ENCODE measurements at regions of chr7 and their contacts with region 1.

Region 1: GRCh38 chr7:135957627-135958026 is 19.5 kb downstream of the MTPN start:
- DNase-seq: no peak
- H3K4me3 ChIP-seq: no peak overlapping the region
- H3K27ac ChIP-seq: no peak overlapping the region
- H3K4me1 ChIP-seq: no peaks in the 10 kb centered on the region
- H3K27me3 ChIP-seq: no peaks in the 10 kb centered on the region
- CTCF ChIP-seq: no peak

Region 2: GRCh38 chr7:135251496-135252391 is 705.9 kb before region 1 on chr7:
- CTCF ChIA-PET with region 1: no interaction called
- dilution Hi-C with region 1: no loop called
- in situ Hi-C with region 1: no loop called
- intact Hi-C with region 1: no loop called
- DNase-seq: no peak
- H3K4me3 ChIP-seq: no peak overlapping the region
- H3K27ac ChIP-seq: no peak overlapping the region
- H3K4me1 ChIP-seq: peaks cover 16% of the 10 kb centered on the region
- H3K27me3 ChIP-seq: no peaks in the 10 kb centered on the region
- CTCF ChIP-seq: no peak

Region 3: DNA sequence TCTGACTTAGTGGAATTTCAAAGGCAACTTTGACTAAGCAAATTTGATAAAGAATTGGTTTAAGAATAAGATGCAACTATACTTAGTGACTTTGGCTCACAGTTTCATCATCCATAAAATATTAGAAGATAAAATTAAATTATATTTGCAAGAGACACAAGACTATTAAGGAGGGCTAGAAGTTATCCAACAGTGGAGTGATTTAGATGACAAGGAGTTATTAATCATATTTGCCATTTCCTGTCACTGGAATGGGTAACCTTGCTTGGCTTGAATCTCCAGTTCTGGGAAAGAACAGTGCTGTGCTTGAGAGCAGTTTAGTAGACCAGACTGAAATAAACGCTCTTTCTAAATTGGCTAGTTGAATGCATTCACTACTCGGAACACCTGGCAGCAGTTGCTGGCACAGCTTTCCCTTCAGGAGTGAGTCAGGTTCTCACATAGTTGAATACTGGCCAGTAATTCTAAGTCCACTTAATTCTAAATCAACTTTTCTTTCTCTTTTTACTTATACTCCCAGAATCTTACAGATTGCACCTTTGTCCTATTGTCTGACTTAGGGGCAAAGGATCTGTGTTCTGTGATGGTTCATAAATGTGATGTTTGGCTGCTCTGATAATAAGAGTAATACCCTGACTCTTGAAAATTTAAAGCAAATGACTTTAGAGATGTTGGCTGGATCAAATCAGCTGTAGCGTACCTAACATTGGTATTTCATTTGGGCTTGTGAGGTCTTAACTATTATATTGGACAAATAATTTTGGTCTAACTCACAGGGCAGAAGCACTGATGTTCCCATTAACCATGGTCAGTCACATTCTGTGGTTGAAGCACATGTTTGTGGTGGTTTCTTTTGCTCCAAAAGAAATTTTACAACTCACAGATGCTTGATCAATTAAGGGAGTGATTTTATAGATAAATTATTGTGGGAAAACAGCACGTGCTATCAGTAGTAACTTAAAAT is 278.7 kb before region 1 on chr7:
- CTCF ChIA-PET with region 1: no interaction called
- dilution Hi-C with region 1: no loop called
- in situ Hi-C with region 1: no loop called
- intact Hi-C with region 1: no loop called
- DNase-seq: peak; percentile 82
- H3K4me3 ChIP-seq: peak overlapping the region in 1 of 3 experiments; percentile 14
- H3K27ac ChIP-seq: peak overlapping the region; percentile 73
- H3K4me1 ChIP-seq: peaks cover 40% of the 10 kb centered on the region
- H3K27me3 ChIP-seq: no peaks in the 10 kb centered on the region
- CTCF ChIP-seq: no peak

Region 4: GRCh38 chr7:135970682-135971365 is 13.2 kb after region 1 on chr7:
- CTCF ChIA-PET with region 1: no interaction called
- dilution Hi-C with region 1: no loop called
- in situ Hi-C with region 1: no loop called
- intact Hi-C with region 1: loop called (anchors 2 kb)
- DNase-seq: no peak
- H3K4me3 ChIP-seq: no peak overlapping the region
- H3K27ac ChIP-seq: no peak overlapping the region
- H3K4me1 ChIP-seq: peaks cover 8% of the 10 kb centered on the region
- H3K27me3 ChIP-seq: no peaks in the 10 kb centered on the region
- CTCF ChIP-seq: no peak